ENCODE measurements at regions of chr3 and their contacts with region 1.

Region 1: DNA sequence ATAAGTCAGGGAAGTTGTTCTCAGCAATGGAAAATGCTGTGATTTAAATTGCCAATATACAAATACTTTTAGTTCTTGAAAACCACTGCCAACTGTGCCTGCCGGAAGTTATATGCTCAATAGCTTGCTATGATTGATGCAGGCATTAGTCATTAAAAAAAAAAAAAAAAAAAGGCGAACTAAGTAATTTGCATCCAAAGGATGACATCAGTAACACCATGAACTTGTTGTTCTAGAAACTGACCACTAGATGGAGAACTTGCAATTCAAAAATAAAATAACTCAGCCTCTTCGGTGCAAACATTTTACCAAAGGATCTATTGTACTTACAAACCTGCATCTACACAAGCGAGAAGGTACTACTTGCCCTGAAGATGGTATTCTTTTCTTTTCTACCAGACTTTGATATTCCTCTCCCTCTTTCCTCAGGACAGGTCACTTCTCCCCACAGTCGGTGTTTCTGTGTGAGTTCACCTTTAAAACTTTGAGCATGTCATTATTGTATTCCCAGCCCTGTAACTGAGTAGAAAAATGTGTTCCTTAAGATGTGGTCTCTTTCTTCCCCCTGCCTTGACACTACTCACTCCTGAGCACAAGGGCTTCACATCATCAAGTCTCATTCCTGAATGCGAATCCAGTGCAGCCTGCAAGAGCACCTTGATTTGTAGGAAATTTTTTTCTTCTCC is 115.0 kb upstream of the VEPH1 start:
- DNase-seq: peak; percentile 41
- ATAC-seq: peak; percentile 46; the same call in 2 of the 3 replicates
- H3K4me3 ChIP-seq: no peak overlapping the region
- H3K27ac ChIP-seq: no peak overlapping the region
- H3K4me1 ChIP-seq: no peaks in the 10 kb centered on the region
- H3K27me3 ChIP-seq: no peaks in the 10 kb centered on the region; a peak in 2 of 5 replicates
- CTCF ChIP-seq: peak; percentile 63
- EP300 ChIP-seq: no peak
- POLR2A ChIP-seq: no peak
- RAD21 ChIP-seq: no peak

Region 2: GRCh38 chr3:157166561-157166960 is 451.7 kb before region 1 on chr3:
- CTCF ChIA-PET with region 1: no interaction called
- POLR2A ChIA-PET with region 1: no interaction called
- in situ Hi-C with region 1: no loop called
- intact Hi-C with region 1: no loop called
- DNase-seq: no peak
- ATAC-seq: peak; percentile 24; the same call in 1 of the 3 replicates
- H3K4me3 ChIP-seq: no peak overlapping the region
- H3K27ac ChIP-seq: no peak overlapping the region
- H3K4me1 ChIP-seq: peaks cover 39% of the 10 kb centered on the region
- H3K27me3 ChIP-seq: no peaks in the 10 kb centered on the region
- CTCF ChIP-seq: no peak
- EP300 ChIP-seq: no peak
- POLR2A ChIP-seq: no peak
- RAD21 ChIP-seq: no peak

Region 3: GRCh38 chr3:158097593-158098308 is 479.5 kb after region 1 on chr3:
- CTCF ChIA-PET with region 1: no interaction called
- POLR2A ChIA-PET with region 1: no interaction called
- in situ Hi-C with region 1: no loop called
- intact Hi-C with region 1: loop called (anchors 10 kb)
- DNase-seq: peak; percentile 76
- ATAC-seq: peak; percentile 96
- H3K4me3 ChIP-seq: peak overlapping the region; percentile 70 to 85 (median 73)
- H3K27ac ChIP-seq: no peak overlapping the region
- H3K4me1 ChIP-seq: peaks cover 9% of the 10 kb centered on the region
- H3K27me3 ChIP-seq: peaks cover 2 to 31% of the 10 kb centered on the region in 2 experiments; a peak in 2 of 5 replicates
- CTCF ChIP-seq: 0 out of 2 replicates have a peak, but pooled peaks have one; percentile 21
- EP300 ChIP-seq: no peak
- POLR2A ChIP-seq: peak; percentile 75 to 86
- RAD21 ChIP-seq: no peak

Region 4: DNA sequence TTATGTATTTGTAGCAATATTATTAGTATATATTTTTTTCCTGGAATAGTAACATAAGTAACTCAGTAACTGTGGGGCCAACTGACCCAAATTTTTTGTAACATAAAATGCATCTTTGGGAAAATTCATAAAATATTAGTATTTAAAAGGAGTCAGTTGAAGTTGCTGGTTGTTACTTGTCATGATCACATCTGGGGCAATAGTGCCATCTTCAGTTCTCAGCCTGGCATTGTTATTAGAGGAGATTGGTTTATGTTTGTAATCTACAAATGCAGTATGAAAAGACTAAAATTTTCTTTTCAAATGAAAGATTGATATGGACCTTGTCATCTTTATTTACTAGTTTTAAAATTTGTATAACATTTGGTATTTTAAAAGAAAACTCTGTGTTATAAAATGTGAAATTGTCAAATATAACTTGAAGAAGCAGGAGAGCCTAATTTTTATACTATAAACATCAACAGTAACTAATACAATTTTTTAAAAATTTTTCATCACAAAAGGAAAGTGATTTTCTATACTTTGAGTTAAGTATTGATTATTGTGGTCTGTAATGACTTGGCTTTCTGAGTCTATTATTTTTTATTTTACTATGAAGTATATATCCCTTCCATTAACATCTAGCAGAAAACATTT is 914.0 kb after region 1 on chr3:
- CTCF ChIA-PET with region 1: no interaction called
- POLR2A ChIA-PET with region 1: no interaction called
- in situ Hi-C with region 1: loop called (anchors 25 kb)
- intact Hi-C with region 1: loop called (anchors 1 kb)
- DNase-seq: peak; percentile 44
- ATAC-seq: no peak
- H3K4me3 ChIP-seq: no peak overlapping the region
- H3K27ac ChIP-seq: no peak overlapping the region
- H3K4me1 ChIP-seq: no peaks in the 10 kb centered on the region
- H3K27me3 ChIP-seq: no peaks in the 10 kb centered on the region
- CTCF ChIP-seq: peak; percentile 48
- EP300 ChIP-seq: no peak
- POLR2A ChIP-seq: no peak
- RAD21 ChIP-seq: no peak

Measured in HepG2 (cell line).